ENCODE measurements at regions of chr3 and their contacts with region 1.

Region 1: DNA sequence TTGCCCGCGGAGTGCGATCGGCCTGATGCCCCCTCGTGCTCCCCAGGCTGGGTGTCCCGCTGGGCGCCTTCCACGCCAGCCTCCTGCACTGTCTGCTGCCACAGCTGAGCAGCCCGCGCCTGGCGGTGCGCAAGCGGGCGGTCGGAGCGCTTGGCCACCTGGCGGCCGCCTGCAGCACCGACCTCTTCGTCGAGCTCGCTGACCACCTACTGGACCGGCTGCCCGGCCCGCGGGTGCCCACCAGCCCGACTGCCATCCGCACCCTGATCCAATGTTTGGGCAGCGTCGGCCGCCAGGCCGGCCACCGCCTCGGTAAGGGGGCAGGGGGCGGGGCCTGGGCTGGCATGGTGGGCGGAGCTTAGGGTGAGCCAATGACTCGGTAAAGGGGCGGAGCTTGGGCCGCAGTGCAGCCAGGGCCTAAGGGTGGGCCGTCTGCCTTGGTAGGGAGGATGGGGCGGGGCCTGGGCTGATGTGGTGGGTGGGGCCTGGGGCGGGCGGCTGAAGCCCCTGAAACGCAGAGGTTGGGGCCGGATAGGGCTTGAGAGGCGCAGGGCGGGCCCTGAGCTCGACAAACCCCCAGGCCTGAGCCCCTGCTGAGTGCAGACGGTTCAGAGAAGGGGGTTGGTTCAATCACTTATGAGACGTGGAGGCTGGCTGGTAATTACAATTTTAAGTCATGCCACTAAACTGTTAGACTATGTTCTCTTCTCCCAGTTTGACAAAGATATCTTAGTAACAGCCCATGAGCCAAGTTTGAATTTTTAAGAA is 13.7 kb downstream of the CAND2 start:
- DNase-seq: peak; percentile 99
- ATAC-seq: peak; percentile 99
- H3K4me3 Mint-ChIP-seq: peak overlapping the region; percentile 61
- H3K27ac Mint-ChIP-seq: peak overlapping the region; percentile 63; the same call in 1 of the 2 replicates
- H3K4me1 Mint-ChIP-seq: peaks cover 13% of the 10 kb centered on the region
- H3K27me3 Mint-ChIP-seq: no peaks in the 10 kb centered on the region; the same call in 1 of the 2 replicates
- CTCF ChIP-seq: peak; percentile 59

Region 2: DNA sequence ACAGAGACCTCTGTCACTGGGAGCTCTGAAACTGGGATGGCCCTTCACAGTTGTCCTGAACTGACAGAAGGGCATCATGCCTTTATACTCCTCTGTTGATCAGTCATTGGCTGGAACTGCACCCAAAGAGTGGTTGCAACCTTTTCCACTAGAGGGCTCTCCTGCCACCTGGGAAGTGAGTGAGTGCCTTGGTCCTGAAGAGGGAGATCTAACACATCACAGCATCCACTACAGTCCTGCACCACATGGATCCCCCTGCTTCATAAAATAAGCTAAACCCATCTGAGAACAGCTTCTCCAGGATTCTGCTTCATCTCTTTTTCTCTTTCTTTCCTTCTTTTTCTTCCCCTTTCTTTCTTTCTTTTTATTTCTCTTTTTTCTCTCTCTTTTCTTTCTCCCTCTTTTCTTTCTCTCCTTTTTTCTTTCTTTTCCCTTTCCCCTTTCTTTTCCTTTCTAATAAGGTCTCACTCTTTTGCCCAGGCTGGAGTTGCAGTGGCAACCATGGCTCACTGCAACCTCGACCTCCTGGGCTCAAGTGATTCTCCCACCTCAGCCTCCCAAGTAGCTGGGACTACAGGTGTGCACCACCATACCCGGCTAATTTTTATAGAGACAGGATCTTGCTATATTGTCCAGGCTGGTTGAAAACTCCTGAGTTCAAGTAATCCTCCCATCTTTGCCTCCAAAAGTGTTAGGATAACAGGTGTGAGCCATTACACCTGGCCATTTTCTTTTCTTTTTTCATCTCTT is 103.5 kb before region 1 on chr3:
- CTCF ChIA-PET with region 1: interaction called, 22 read pairs
- POLR2A ChIA-PET with region 1: no interaction called
- DNase-seq: peak; percentile 78
- ATAC-seq: peak; percentile 99
- H3K4me3 Mint-ChIP-seq: no peak overlapping the region
- H3K27ac Mint-ChIP-seq: no peak overlapping the region
- H3K4me1 Mint-ChIP-seq: no peaks in the 10 kb centered on the region
- H3K27me3 Mint-ChIP-seq: no peaks in the 10 kb centered on the region
- CTCF ChIP-seq: peak; percentile 44; the same call in 1 of the 2 replicates

Region 3: DNA sequence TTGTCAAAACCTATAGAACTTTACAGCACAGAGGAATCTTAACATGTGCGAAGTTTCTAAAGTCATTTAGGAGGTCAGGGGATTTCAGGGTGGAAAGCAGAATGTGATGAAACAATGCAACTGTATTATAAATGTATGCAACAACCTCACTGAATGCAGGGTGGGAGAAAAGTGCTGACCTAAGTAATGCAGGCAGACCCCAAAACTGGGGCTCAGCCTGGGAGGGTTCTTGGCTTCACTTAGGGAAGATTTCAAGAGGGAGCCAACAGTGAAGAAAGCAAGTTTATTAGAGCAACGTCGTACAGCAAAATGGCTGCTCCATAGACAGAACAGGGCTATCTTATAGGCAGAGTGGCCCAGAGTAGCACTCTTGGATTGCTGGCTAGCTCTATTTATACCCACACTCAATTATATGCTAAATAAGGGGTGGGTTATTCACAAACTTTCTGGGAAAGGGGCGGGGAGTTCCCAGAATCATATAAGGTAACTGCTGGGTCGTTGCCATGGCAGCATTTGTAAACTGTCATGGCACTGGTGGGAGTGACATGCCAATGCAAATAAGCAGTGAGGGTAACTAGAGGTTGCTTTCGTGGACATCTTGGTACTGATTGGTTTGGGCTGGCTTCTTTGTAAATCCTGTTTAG is 27.9 kb before region 1 on chr3:
- CTCF ChIA-PET with region 1: interaction called, 47 read pairs
- POLR2A ChIA-PET with region 1: no interaction called
- DNase-seq: peak; percentile 61
- ATAC-seq: peak; percentile 93
- H3K4me3 Mint-ChIP-seq: no peak overlapping the region
- H3K27ac Mint-ChIP-seq: no peak overlapping the region
- H3K4me1 Mint-ChIP-seq: peaks cover 22% of the 10 kb centered on the region
- H3K27me3 Mint-ChIP-seq: no peaks in the 10 kb centered on the region; the same call in none of the 2 replicates
- CTCF ChIP-seq: no peak

Region 4: DNA sequence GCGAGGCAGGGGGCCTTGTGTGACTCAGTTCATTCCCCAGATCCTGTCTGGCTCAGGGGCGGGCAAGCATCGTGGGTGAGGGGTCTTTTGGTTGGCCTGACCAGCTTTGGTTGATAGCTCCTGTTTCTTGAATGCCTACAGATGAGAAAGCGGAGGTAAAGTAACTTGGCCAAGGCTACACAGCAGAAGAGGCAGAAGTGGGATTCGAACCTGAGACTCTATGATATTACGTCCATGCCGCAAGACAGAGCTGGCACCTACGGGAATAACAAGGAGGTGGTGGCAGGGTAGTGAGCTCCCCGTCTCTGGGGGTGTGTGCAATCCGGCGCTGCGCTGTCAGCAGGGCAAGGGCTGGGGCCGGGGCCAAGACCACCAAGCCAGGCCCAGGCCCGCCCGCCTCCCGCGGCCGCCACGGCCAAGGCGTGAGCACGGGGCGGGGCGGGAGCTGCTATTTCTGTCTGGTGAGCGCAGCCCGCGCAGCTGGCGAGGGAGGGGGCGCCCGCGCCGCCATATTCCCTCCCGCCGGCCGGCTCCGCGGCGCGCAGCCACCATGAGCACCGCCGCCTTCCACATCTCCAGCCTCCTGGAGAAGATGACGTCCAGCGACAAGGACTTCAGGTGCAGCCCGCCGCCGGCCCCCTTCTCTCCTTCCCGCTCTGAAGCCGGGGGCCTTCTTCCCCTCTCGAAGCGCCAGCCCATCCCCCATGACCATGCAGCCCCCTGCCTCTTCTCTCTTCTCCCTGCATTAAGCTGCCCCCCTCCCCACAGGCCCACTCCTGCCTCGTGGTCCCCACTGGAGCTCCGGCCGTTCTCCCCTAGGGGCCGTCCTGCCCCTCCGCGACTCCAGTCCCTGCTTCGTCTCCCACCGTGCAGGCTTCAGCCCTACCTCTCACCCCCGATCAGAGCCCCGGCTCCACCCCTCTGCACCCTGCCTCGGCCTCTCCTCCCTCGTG is 13.8 kb before region 1 on chr3 and contains the start of gene CAND2:
- CTCF ChIA-PET with region 1: interaction called, 62 read pairs
- POLR2A ChIA-PET with region 1: interaction called, 6 read pairs
- DNase-seq: peak; percentile 48
- ATAC-seq: peak; percentile 85
- H3K4me3 Mint-ChIP-seq: peak within 1 kb of the TSS; percentile 83
- H3K27ac Mint-ChIP-seq: no peak within 1 kb of the TSS
- H3K4me1 Mint-ChIP-seq: peaks cover 20% of the 10 kb centered on the region
- H3K27me3 Mint-ChIP-seq: no peaks in the 10 kb centered on the region; the same call in 1 of the 2 replicates
- CTCF ChIP-seq: no peak
- total RNA-seq, gene CAND2: 13.7 to 15.4 TPM (median 14.3 TPM) in 3 replicates

Region 5: DNA sequence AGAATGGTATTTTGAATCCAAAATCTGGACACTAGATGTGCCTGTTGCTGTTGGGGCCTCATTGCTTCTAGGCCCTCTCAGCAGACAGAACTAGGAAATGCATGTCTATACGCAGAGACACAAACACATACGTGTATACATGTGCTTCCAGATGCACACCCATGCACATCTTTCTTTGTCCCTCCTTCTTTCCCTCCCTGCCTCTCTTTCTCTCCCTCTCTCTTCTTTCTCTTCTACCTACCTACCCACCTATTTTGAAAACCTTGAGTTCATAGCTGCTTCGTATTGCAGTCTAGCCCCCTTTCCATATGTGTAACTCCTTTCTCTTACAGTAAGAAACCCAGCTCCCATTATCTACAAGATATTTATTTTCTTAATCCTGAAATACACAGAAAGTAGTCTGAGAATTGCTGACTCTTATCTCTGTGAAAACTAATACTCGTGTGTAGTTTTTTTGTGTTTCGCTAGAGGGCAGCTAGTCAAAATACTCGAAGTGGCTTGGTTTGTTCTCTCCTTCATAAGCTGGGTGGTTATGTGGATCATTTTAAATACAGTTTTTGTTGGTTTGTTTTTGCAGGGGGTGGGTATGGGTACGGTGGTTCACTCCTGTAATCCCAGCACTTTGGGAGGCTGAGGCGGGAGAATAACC is 12.7 kb after region 1 on chr3:
- CTCF ChIA-PET with region 1: interaction called, 18 read pairs
- POLR2A ChIA-PET with region 1: no interaction called
- DNase-seq: no peak
- ATAC-seq: peak; percentile 38; the same call in 1 of the 2 replicates
- H3K4me3 Mint-ChIP-seq: no peak overlapping the region
- H3K27ac Mint-ChIP-seq: 0 out of 2 replicates have a peak overlapping the region, but pooled peaks have one; percentile 81
- H3K4me1 Mint-ChIP-seq: peaks cover 8% of the 10 kb centered on the region
- H3K27me3 Mint-ChIP-seq: no peaks in the 10 kb centered on the region
- CTCF ChIP-seq: no peak

Region 6: GRCh38 chr3:12830785-12831156 is 20.6 kb after region 1 on chr3:
- CTCF ChIA-PET with region 1: interaction called, 17 read pairs
- POLR2A ChIA-PET with region 1: interaction called, 5 read pairs
- DNase-seq: no peak
- ATAC-seq: no peak
- H3K4me3 Mint-ChIP-seq: no peak overlapping the region
- H3K27ac Mint-ChIP-seq: peak overlapping the region; percentile 66; the same call in 1 of the 2 replicates
- H3K4me1 Mint-ChIP-seq: peaks cover 52% of the 10 kb centered on the region
- H3K27me3 Mint-ChIP-seq: no peaks in the 10 kb centered on the region
- CTCF ChIP-seq: 0 out of 2 replicates have a peak, but pooled peaks have one; percentile 15

Region 7: GRCh38 chr3:12841149-12841970 is 31.2 kb after region 1 on chr3 and contains the start of gene RPL32:
- CTCF ChIA-PET with region 1: interaction called, 15 read pairs
- POLR2A ChIA-PET with region 1: interaction called, 3 read pairs
- DNase-seq: peak; percentile 76
- ATAC-seq: peak; percentile 78
- H3K4me3 Mint-ChIP-seq: peak within 1 kb of the TSS; percentile 98
- H3K27ac Mint-ChIP-seq: peak within 1 kb of the TSS; percentile 99
- H3K4me1 Mint-ChIP-seq: peaks cover 51% of the 10 kb centered on the region
- H3K27me3 Mint-ChIP-seq: peaks cover 4% of the 10 kb centered on the region
- CTCF ChIP-seq: peak; percentile 18; the same call in 1 of the 2 replicates
- total RNA-seq, gene RPL32: 1,643 to 1,831 TPM (median 1,818 TPM) in 3 replicates